ENCODE measurements at regions of chr19 and their contacts with region 1.

Region 1: GRCh38 chr19:10194500-10195289 is at the start of gene DNMT1:
- DNase-seq: peak; percentile 88 to 97
- H3K4me3 ChIP-seq: peak within 1 kb of the TSS; percentile 87
- H3K27ac ChIP-seq: peak within 1 kb of the TSS; percentile 2; the same call in 1 of the 2 replicates
- H3K4me1 ChIP-seq: peaks cover 18% of the 10 kb centered on the region
- H3K27me3 ChIP-seq: no peaks in the 10 kb centered on the region
- CTCF ChIP-seq: no peak
- total RNA-seq, gene DNMT1: 111 and 117 TPM in 2 replicates

Region 2: DNA sequence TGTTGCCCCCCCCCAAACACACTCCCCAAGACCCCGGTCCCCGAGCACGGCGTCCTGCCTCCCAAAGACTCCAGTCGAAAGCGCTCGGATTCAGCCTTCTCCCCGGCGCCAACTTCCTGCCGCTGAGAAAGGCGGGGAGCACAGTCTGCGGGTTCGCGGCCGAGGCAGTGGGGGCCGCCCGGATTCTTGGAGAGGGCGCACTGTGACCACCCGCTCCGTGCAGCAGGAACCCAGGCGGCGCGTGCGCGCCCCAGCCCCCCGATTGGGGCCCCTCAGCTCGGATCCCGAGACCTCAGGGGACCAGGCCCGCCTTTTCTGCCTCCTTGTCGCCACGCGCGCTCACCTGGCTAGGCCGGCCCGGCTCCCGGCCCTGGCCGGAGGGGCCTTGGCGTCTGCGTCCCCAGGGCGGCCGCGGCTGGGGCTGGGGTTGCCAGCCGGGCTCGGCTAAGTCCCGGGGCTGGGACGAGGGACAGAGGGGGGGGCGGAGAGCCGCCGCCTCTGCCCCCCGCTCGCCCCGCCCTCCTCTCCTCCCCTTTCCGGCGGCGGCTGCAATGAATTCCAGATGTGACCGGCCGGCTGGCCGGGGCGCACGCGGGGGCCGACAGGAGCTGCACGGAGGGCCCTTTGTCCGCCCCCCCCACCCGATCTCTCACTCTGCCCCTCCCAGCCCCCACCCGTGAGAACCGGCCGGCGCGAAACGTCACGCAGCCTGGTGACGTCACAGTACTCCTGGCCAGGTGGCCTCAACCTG is 36.3 kb after region 1 on chr19 and contains the start of gene S1PR2:
- CTCF ChIA-PET with region 1: no interaction called
- POLR2A ChIA-PET with region 1: interaction called, 3 read pairs
- intact Hi-C with region 1: loop called (anchors 5 kb)
- DNase-seq: peak; percentile 50 to 75
- H3K4me3 ChIP-seq: peak within 1 kb of the TSS; percentile 71
- H3K27ac ChIP-seq: no peak within 1 kb of the TSS
- H3K4me1 ChIP-seq: 0 out of 2 replicates have a peak, but pooled peaks cover 7% of the 10 kb centered on the region
- H3K27me3 ChIP-seq: no peaks in the 10 kb centered on the region
- CTCF ChIP-seq: no peak
- total RNA-seq, gene S1PR2: 6.9 and 7.3 TPM in 2 replicates

Region 3: GRCh38 chr19:10543420-10544241 is 348.9 kb after region 1 on chr19 and contains the start of gene ATG4D:
- CTCF ChIA-PET with region 1: no interaction called
- POLR2A ChIA-PET with region 1: no interaction called
- intact Hi-C with region 1: no loop called
- DNase-seq: peak; percentile 87 to 95
- H3K4me3 ChIP-seq: peak within 1 kb of the TSS; percentile 82
- H3K27ac ChIP-seq: no peak within 1 kb of the TSS
- H3K4me1 ChIP-seq: peaks cover 6% of the 10 kb centered on the region; the same call in 1 of the 2 replicates
- H3K27me3 ChIP-seq: no peaks in the 10 kb centered on the region
- CTCF ChIP-seq: no peak
- total RNA-seq, gene ATG4D: 33.1 and 40.2 TPM in 2 replicates